Activated CD4-positive, alpha-beta T cell treated with anti-CD3 and anti-CD28 coated beads for 36 hours (primary cell): ENCODE measurements at regions of chr2 and their contacts with region 1.

Region 1: GRCh38 chr2:169479257-169480078 is at the start of gene BBS5:
- DNase-seq: peak; percentile 91
- ATAC-seq: peak; percentile 99
- H3K4me3 Mint-ChIP-seq: peak within 1 kb of the TSS; percentile 87
- H3K27ac Mint-ChIP-seq: peak within 1 kb of the TSS; percentile 55
- H3K4me1 Mint-ChIP-seq: peaks cover 14% of the 10 kb centered on the region
- H3K27me3 Mint-ChIP-seq: no peaks in the 10 kb centered on the region
- total RNA-seq, gene BBS5: 2.7 to 3.4 TPM

Region 2: DNA sequence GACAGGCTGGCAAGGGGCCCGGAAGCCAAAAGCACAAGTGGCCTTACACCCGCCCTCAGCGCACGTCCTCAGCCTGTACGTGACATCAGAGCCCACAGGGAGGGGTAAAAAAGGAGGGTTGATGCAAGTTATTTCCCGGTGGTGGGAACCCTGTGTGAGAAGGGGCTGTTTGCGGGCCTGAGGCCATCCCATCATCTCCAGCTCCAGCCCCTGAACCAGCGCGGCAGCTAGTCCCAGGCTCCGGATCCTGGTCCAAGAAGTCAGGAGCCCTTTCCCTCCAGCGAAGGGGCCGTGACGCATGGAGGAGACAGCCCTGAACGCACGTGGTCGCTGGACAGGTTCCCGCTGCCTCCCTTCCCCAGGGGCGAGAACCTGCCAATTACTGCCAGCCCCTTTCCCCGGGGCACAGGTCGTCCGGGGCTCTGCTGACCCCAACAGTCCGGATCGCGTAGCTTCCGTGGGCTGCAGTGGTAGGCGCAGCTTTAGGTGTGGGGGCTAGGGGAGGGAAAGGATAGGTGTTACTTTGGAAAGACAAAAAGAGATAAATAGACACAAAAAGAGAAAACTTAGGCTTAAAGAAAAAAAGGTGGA is 115.8 kb before region 1 on chr2:
- CTCF ChIA-PET with region 1: no interaction called
- POLR2A ChIA-PET with region 1: no interaction called
- intact Hi-C with region 1: loop called in 1 of 2 experiments (anchors 2 kb)
- DNase-seq: peak; percentile 80
- ATAC-seq: peak; percentile 73
- H3K4me3 Mint-ChIP-seq: peak overlapping the region; percentile 86
- H3K27ac Mint-ChIP-seq: peak overlapping the region; percentile 49
- H3K4me1 Mint-ChIP-seq: peaks cover 29% of the 10 kb centered on the region
- H3K27me3 Mint-ChIP-seq: peaks cover 38% of the 10 kb centered on the region

Region 3: GRCh38 chr2:169468841-169469240 is 10.6 kb before region 1 on chr2:
- CTCF ChIA-PET with region 1: interaction called, 12 read pairs
- POLR2A ChIA-PET with region 1: no interaction called
- intact Hi-C with region 1: no loop called
- DNase-seq: no peak
- ATAC-seq: peak; percentile 54
- H3K4me3 Mint-ChIP-seq: no peak overlapping the region
- H3K27ac Mint-ChIP-seq: no peak overlapping the region
- H3K4me1 Mint-ChIP-seq: no peaks in the 10 kb centered on the region
- H3K27me3 Mint-ChIP-seq: no peaks in the 10 kb centered on the region

Region 4: GRCh38 chr2:169493360-169493759 is 13.9 kb after region 1 on chr2:
- CTCF ChIA-PET with region 1: interaction called, 12 read pairs
- POLR2A ChIA-PET with region 1: no interaction called
- intact Hi-C with region 1: no loop called
- DNase-seq: no peak
- ATAC-seq: no peak
- H3K4me3 Mint-ChIP-seq: no peak overlapping the region
- H3K27ac Mint-ChIP-seq: no peak overlapping the region
- H3K4me1 Mint-ChIP-seq: no peaks in the 10 kb centered on the region
- H3K27me3 Mint-ChIP-seq: no peaks in the 10 kb centered on the region

Region 5: GRCh38 chr2:169509298-169509885 is 29.9 kb after region 1 on chr2 and contains the start of gene KLHL41:
- CTCF ChIA-PET with region 1: no interaction called
- POLR2A ChIA-PET with region 1: no interaction called
- intact Hi-C with region 1: no loop called
- DNase-seq: no peak
- ATAC-seq: no peak
- H3K4me3 Mint-ChIP-seq: no peak within 1 kb of the TSS
- H3K27ac Mint-ChIP-seq: no peak within 1 kb of the TSS
- H3K4me1 Mint-ChIP-seq: peaks cover 6% of the 10 kb centered on the region
- H3K27me3 Mint-ChIP-seq: no peaks in the 10 kb centered on the region
- total RNA-seq, gene KLHL41: 0.46 TPM in 1 of 2 experiments, not detected in the other

Region 6: GRCh38 chr2:169573160-169573973 is 93.9 kb after region 1 on chr2 and contains the start of gene FASTKD1:
- CTCF ChIA-PET with region 1: no interaction called
- POLR2A ChIA-PET with region 1: no interaction called
- intact Hi-C with region 1: loop called in 1 of 2 experiments (anchors 1 kb)
- DNase-seq: peak; percentile 94
- ATAC-seq: peak; percentile 100
- H3K4me3 Mint-ChIP-seq: peak within 1 kb of the TSS; percentile 97
- H3K27ac Mint-ChIP-seq: peak within 1 kb of the TSS; percentile 92
- H3K4me1 Mint-ChIP-seq: peaks cover 20% of the 10 kb centered on the region
- H3K27me3 Mint-ChIP-seq: no peaks in the 10 kb centered on the region
- total RNA-seq, gene FASTKD1: 29.8 to 39.7 TPM